Posterior cingulate gyrus (tissue), 11 donors: ENCODE measurements at regions of chr1 and their contacts with region 1.

Region 1: GRCh38 chr1:165768513-165769394 is at the start of gene TMCO1:
- DNase-seq: peak; percentile 93 to 100 (median 98)

Region 2: GRCh38 chr1:165679282-165680036 is 89.3 kb before region 1 on chr1:
- intact Hi-C with region 1: no loop called
- DNase-seq: no peak

Region 3: DNA sequence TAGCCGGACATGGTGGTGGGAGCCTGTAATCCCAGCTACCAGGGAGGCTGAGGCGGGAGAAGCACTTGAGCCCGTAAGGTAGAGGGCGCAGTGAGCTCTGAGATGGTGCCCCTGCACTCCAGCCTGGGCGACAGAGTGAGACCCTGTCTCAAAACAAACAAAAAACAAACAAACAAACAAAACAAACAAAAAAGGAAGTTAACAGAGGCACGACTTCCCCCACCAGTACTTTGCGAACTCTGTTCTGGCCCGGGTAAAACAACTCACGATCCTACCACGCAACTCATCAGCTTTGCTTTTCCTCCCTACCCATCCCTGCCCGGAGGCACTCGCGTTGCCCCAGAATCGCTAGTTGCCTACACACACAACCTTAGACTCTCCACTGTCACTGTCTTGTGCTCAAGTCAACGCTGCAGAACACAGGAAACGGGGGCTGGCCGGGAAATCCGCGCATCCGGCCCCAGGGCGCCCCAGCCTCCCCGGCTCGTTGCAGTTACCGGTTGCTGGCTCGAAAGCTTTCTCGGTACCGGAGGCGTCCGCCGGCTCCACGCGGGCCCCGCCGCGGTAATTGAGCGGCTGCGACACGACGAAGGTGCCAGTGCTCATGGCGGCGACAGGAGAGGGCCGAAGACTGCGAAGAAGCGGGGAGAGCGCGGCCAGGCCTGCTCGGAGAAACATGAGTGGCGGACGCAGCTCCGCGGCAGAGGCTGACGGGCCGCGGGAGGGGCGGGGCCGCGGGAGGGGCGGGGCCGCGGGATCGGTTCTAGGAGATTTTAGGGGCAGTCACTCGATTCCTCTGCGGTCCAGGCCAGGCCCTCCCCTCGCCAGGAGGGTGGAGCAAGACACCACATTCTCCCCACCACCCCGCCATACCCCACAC is 70.6 kb before region 1 on chr1 and contains the start of gene ALDH9A1:
- intact Hi-C with region 1: loop called (anchors 1 kb)
- DNase-seq: peak; percentile 76 to 98 (median 88)

Region 4: DNA sequence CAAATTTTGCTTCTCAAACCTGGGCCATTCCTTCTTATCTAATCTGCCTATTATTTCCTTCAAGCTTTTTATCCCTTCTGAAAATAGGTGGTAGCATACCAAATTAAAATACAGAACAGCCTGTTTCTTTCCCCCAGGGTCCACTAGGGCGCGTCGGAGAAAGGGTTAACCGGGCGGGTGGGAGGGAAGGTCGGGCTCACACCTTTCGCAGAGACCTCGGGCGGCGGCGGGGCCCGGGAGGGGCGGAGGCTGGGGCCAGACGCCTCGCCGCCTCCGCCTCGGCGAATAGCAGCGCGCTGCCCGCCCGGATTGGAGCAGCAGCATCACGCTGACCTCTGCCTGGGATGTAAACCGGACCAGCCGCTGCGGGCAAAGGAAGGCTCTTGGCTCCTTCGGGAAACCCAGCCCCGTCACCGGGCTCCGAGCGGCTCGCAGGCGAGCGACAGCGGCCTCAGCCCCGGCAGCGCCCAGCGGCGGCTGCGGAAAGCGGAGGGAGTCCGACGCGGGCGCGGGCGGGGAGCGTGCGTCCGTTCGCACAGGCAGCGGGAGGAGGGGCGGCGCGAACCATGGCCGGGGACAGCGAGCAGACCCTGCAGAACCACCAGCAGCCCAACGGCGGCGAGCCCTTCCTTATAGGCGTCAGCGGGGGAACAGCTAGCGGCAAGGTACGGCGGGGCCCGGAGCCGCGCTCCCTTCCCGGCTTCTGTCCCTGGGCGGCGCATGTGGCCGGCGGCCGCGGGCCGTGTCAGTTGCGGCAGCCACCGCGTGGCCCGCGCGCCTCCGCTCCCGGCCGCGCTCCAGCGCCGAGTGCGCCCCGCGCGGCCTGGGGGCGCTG is 58.7 kb after region 1 on chr1 and contains the start of gene UCK2:
- intact Hi-C with region 1: loop called (anchors 2 kb)
- DNase-seq: peak; percentile 58 to 95 (median 74)